ENCODE measurements at regions of chr20 and their contacts with region 1.

Region 1: GRCh38 chr20:32902456-32903420 is 44.0 kb downstream of the EFCAB8 start:
- DNase-seq: peak; percentile 61 to 85 (median 66)
- ATAC-seq: peak; percentile 95
- H3K4me3 ChIP-seq: no peak overlapping the region
- H3K4me3 Mint-ChIP-seq: no peak overlapping the region
- H3K27ac ChIP-seq: no peak overlapping the region
- H3K27ac Mint-ChIP-seq: peak overlapping the region; percentile 47
- H3K4me1 ChIP-seq: peaks cover 36% of the 10 kb centered on the region
- H3K4me1 Mint-ChIP-seq: peaks cover 37% of the 10 kb centered on the region
- H3K27me3 ChIP-seq: no peaks in the 10 kb centered on the region
- H3K27me3 Mint-ChIP-seq: no peaks in the 10 kb centered on the region
- CTCF ChIP-seq: peak; percentile 90

Region 2: GRCh38 chr20:32497589-32498224 is 405.0 kb before region 1 on chr20:
- CTCF ChIA-PET with region 1: no interaction called
- POLR2A ChIA-PET with region 1: no interaction called
- intact Hi-C with region 1: no loop called
- DNase-seq: peak in 1 of 14 experiments; percentile 29
- ATAC-seq: no peak
- H3K4me3 ChIP-seq: no peak overlapping the region
- H3K4me3 Mint-ChIP-seq: no peak overlapping the region
- H3K27ac ChIP-seq: no peak overlapping the region
- H3K27ac Mint-ChIP-seq: peak overlapping the region; percentile 62
- H3K4me1 ChIP-seq: peaks cover 24% of the 10 kb centered on the region
- H3K4me1 Mint-ChIP-seq: peaks cover 61% of the 10 kb centered on the region
- H3K27me3 ChIP-seq: no peaks in the 10 kb centered on the region
- H3K27me3 Mint-ChIP-seq: no peaks in the 10 kb centered on the region
- CTCF ChIP-seq: no peak

Region 3: GRCh38 chr20:32810941-32811340 is 91.8 kb before region 1 on chr20:
- CTCF ChIA-PET with region 1: no interaction called
- POLR2A ChIA-PET with region 1: no interaction called
- intact Hi-C with region 1: no loop called
- DNase-seq: no peak
- ATAC-seq: no peak
- H3K4me3 ChIP-seq: no peak overlapping the region
- H3K4me3 Mint-ChIP-seq: no peak overlapping the region
- H3K27ac ChIP-seq: no peak overlapping the region
- H3K27ac Mint-ChIP-seq: no peak overlapping the region
- H3K4me1 ChIP-seq: no peaks in the 10 kb centered on the region
- H3K4me1 Mint-ChIP-seq: peaks cover 4% of the 10 kb centered on the region
- H3K27me3 ChIP-seq: no peaks in the 10 kb centered on the region
- H3K27me3 Mint-ChIP-seq: no peaks in the 10 kb centered on the region
- CTCF ChIP-seq: no peak

Region 4: DNA sequence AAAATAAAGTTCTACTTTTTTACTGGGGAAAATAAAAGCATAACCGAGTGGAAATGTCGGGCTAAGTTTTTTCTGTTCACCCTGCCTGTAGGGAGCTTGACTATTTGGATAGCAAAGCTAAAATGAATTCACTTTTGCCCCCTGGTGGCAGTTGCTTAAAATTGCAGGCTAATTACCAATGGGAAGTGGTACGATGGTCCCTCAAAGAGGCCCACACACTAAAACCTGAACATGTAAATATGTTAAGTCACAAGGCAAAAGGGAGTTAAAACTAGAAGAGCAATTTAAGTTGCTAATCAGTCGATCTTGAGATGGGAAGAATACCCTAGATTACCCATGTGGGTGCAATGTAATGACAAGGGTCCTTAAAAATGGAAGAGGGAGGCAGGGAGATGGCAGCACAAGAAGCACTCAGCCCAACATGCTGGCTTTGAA is 102.4 kb after region 1 on chr20:
- CTCF ChIA-PET with region 1: interaction called, 9 read pairs
- POLR2A ChIA-PET with region 1: no interaction called
- intact Hi-C with region 1: loop called in 1 of 2 experiments (anchors 1 kb)
- DNase-seq: peak in 4 of 14 experiments; percentile 43 to 66 (median 61)
- ATAC-seq: no peak
- H3K4me3 ChIP-seq: no peak overlapping the region
- H3K4me3 Mint-ChIP-seq: no peak overlapping the region
- H3K27ac ChIP-seq: no peak overlapping the region
- H3K27ac Mint-ChIP-seq: peak overlapping the region; percentile 35
- H3K4me1 ChIP-seq: peaks cover 18% of the 10 kb centered on the region
- H3K4me1 Mint-ChIP-seq: peaks cover 37% of the 10 kb centered on the region
- H3K27me3 ChIP-seq: no peaks in the 10 kb centered on the region
- H3K27me3 Mint-ChIP-seq: no peaks in the 10 kb centered on the region
- CTCF ChIP-seq: peak; percentile 65

Region 5: DNA sequence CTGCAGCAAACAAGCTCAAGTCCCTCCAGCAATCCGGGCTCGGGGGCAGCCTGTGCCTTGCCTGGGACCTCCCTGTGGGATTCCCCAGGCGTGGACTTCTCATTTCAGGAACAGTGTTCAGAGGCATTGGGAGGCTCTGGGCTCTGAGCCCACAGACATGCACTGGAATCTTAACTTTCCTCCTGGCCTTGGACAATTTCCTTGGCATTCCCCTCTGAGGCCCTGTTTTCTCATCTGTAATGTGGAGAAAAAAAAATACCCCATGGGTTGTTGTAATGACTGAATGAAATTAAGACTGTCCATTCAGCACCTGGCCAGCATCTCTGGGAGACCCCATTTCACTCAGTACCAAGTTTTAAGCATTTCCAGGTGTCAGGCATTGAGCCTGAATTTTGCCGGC is 194.3 kb after region 1 on chr20:
- CTCF ChIA-PET with region 1: interaction called, 15 read pairs
- POLR2A ChIA-PET with region 1: interaction called, 9 read pairs
- intact Hi-C with region 1: loop called (anchors 1 kb)
- DNase-seq: no peak
- ATAC-seq: no peak
- H3K4me3 ChIP-seq: no peak overlapping the region
- H3K4me3 Mint-ChIP-seq: no peak overlapping the region
- H3K27ac ChIP-seq: no peak overlapping the region
- H3K27ac Mint-ChIP-seq: no peak overlapping the region
- H3K4me1 ChIP-seq: peaks cover 6% of the 10 kb centered on the region
- H3K4me1 Mint-ChIP-seq: peaks cover 11% of the 10 kb centered on the region
- H3K27me3 ChIP-seq: no peaks in the 10 kb centered on the region
- H3K27me3 Mint-ChIP-seq: no peaks in the 10 kb centered on the region
- CTCF ChIP-seq: no peak

Region 6: GRCh38 chr20:33178726-33179125 is 276.0 kb after region 1 on chr20:
- CTCF ChIA-PET with region 1: no interaction called
- POLR2A ChIA-PET with region 1: no interaction called
- intact Hi-C with region 1: no loop called
- DNase-seq: no peak
- ATAC-seq: no peak
- H3K4me3 ChIP-seq: no peak overlapping the region
- H3K4me3 Mint-ChIP-seq: no peak overlapping the region
- H3K27ac ChIP-seq: no peak overlapping the region
- H3K27ac Mint-ChIP-seq: no peak overlapping the region
- H3K4me1 ChIP-seq: no peaks in the 10 kb centered on the region
- H3K4me1 Mint-ChIP-seq: no peaks in the 10 kb centered on the region
- H3K27me3 ChIP-seq: no peaks in the 10 kb centered on the region
- H3K27me3 Mint-ChIP-seq: no peaks in the 10 kb centered on the region
- CTCF ChIP-seq: no peak

Region 7: GRCh38 chr20:33291830-33292355 is 389.2 kb after region 1 on chr20:
- CTCF ChIA-PET with region 1: interaction called, 12 read pairs
- POLR2A ChIA-PET with region 1: no interaction called
- intact Hi-C with region 1: loop called (anchors 1 to 2 kb)
- DNase-seq: peak; percentile 51 to 79 (median 60)
- ATAC-seq: peak; percentile 67
- H3K4me3 ChIP-seq: no peak overlapping the region
- H3K4me3 Mint-ChIP-seq: no peak overlapping the region
- H3K27ac ChIP-seq: no peak overlapping the region
- H3K27ac Mint-ChIP-seq: no peak overlapping the region
- H3K4me1 ChIP-seq: no peaks in the 10 kb centered on the region
- H3K4me1 Mint-ChIP-seq: no peaks in the 10 kb centered on the region
- H3K27me3 ChIP-seq: no peaks in the 10 kb centered on the region
- H3K27me3 Mint-ChIP-seq: peaks cover 10% of the 10 kb centered on the region
- CTCF ChIP-seq: peak; percentile 98